ENCODE measurements at regions of chr15 and their contacts with region 1.

Region 1: DNA sequence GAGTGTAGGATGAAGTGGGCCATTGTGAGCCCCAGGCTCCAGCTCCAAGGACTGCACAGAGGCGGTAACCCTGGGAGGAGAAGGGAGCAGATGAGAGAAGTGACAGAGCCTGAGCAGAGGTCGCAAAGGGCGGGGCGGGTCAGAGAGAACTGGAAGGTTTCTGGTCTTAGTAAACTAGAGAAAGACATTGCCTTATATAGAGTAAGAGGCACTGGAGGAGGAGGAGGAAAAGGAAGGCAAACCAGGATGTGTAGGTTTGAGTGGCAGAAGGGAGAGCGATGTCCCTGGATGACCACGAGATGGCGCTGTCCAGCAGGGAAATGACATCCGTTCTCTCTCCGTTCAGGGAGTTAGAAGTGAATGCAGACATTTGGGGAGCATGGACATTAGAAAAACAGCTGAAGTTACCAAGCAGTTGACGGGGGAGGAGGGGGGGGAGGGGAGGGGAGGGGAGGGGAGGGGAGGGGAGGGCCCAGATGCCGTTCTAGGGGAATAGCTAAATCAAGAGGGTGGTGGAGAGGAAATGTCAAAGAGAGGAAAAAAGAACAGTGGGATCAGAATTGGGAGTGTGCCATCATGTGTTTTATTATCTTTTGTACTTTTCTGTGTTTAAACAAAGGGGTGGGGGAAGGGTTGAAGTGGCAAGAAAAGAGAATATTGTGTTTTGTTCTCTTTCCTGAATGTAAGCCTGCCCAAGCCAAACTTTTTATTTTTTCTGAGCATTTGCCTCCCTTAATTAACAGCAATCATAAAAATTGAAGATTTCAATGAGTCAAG is 48.8 kb downstream of the STARD5 start:
- DNase-seq: peak; percentile 85
- H3K4me3 Mint-ChIP-seq: no peak overlapping the region
- H3K27ac Mint-ChIP-seq: peak overlapping the region; percentile 6
- H3K4me1 Mint-ChIP-seq: peaks cover 20% of the 10 kb centered on the region
- H3K27me3 Mint-ChIP-seq: no peaks in the 10 kb centered on the region

Region 2: DNA sequence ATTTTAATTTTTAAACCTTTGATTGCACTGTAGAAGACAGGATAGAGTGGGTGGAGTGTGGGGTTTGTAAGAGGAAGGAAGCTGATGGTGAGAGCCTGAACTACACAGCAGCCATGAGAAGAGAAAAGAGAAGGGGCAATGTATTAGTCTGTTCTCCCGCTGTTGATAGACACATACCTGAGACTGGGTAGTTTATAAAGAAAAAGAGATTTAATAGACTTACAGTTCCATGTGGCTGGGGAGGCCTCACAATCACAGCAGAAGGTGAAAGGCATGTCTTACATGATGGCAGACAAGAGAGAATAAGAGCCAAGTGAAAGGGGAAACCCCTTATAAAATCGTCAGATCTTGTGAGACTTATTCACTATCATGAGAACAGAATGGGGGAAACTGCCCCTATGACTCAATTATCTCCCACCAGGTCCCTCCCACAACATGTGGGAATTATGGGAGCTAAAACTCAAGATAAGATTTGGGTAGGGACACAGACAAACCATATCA is 11.6 kb after region 1 on chr15:
- CTCF ChIA-PET with region 1: interaction called, 21 read pairs
- POLR2A ChIA-PET with region 1: interaction called, 5 read pairs
- DNase-seq: no peak
- H3K4me3 Mint-ChIP-seq: no peak overlapping the region
- H3K27ac Mint-ChIP-seq: peak overlapping the region; percentile 69
- H3K4me1 Mint-ChIP-seq: peaks cover 49% of the 10 kb centered on the region
- H3K27me3 Mint-ChIP-seq: no peaks in the 10 kb centered on the region

Region 3: DNA sequence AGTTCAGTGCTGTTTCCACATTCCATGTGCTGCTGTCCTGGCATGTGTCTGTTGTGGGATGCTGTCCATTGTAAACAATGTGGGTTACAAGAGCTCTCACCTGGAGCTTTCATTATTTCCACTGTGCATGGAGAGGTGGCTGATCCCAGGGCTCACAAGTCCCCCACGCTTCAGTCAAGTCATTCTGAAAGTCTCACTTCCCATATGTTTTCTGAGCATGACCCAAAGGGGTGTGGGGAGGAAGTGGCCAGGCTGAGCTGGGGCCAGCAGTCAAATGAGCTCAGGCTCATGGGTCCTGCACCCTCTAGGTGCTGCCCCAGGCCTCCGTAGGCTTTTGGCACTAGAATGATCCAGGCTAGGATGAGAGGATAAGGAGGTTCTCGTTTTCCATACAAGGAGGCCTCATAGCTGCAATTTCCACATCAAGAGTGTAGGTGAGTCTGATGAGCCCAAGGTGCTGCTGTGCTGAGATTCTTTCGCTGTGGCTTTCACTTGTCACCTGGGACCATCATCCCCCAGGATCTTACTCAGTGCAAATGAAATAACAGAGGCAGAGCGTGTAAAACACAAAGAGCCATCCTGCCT is 26.8 kb after region 1 on chr15:
- CTCF ChIA-PET with region 1: interaction called, 31 read pairs
- POLR2A ChIA-PET with region 1: interaction called, 5 read pairs
- DNase-seq: peak; percentile 60
- H3K4me3 Mint-ChIP-seq: peak overlapping the region; percentile 98
- H3K27ac Mint-ChIP-seq: peak overlapping the region; percentile 78
- H3K4me1 Mint-ChIP-seq: peaks cover 58% of the 10 kb centered on the region
- H3K27me3 Mint-ChIP-seq: no peaks in the 10 kb centered on the region

Region 4: DNA sequence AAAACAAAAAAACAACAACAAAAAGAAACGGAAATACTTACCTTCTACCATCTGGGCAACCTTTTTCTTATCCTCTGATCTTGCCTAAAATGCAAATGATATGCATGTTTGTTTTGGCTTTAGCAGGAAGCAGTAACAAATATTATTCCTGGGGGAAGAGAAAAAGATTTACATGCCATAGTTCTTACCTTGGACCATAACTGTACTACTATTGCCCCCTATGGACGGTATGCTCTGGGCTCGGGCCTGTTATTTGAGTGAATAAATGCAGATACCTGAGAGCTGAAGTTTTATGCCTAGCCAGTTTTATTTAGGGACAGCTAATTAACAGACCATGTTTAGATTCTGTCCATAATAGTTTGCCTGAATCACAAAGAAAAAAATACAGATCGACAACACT is 61.4 kb after region 1 on chr15:
- CTCF ChIA-PET with region 1: interaction called, 42 read pairs
- POLR2A ChIA-PET with region 1: interaction called, 4 read pairs
- DNase-seq: no peak
- H3K4me3 Mint-ChIP-seq: no peak overlapping the region
- H3K27ac Mint-ChIP-seq: no peak overlapping the region
- H3K4me1 Mint-ChIP-seq: no peaks in the 10 kb centered on the region
- H3K27me3 Mint-ChIP-seq: peaks cover 8% of the 10 kb centered on the region

Region 5: DNA sequence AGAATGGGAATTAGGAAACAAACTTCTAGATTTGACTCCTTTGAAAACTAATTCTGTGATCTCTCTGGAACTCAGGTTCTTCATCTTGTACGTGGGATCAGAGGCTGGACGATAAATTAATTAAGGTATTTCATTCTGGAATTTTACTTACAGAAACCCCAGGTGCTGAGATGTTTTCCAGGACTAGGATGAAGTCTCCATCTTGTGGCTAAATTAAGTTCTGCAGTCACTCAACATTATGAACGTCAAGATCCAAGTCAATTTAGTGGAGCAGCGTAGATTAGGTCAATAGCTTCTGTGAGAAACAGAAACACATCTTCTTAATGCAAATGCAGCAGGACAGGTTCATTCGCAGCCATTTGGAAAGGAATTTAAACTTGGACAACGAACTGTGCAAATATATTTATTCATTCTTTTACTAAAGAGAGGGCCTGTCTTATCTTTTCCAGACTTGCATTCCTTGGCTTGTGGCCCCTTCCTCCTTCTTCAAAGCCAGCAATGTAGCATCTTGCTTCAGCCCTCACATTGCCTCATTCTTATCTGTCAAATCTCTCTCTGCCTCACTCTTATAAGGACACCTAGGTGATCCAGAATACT is 125.6 kb after region 1 on chr15:
- CTCF ChIA-PET with region 1: interaction called, 84 read pairs
- POLR2A ChIA-PET with region 1: no interaction called
- DNase-seq: no peak
- H3K4me3 Mint-ChIP-seq: no peak overlapping the region
- H3K27ac Mint-ChIP-seq: no peak overlapping the region
- H3K4me1 Mint-ChIP-seq: no peaks in the 10 kb centered on the region
- H3K27me3 Mint-ChIP-seq: no peaks in the 10 kb centered on the region

Measured in activated CD4-positive, alpha-beta memory T cell treated with anti-CD3 and anti-CD28 coated beads, Interleukin-2, amount 10 ng/mL, durations not matched to agents 7 days and 5 days (primary cell).